ENCODE measurements at regions of chr1 and their contacts with region 1.

Region 1: GRCh38 chr1:97238816-97239215 is 517.2 kb downstream of the PTBP2 start:
- DNase-seq: no peak
- ATAC-seq: no peak
- H3K4me3 ChIP-seq: no peak overlapping the region
- H3K27ac ChIP-seq: no peak overlapping the region
- H3K4me1 ChIP-seq: no peaks in the 10 kb centered on the region
- H3K27me3 ChIP-seq: no peaks in the 10 kb centered on the region
- CTCF ChIP-seq: no peak

Region 2: GRCh38 chr1:97174039-97174701 is 64.6 kb before region 1 on chr1:
- intact Hi-C with region 1: loop called in 1 of 10 experiments (anchors 10 kb)
- DNase-seq: no peak
- ATAC-seq: peak in 1 of 8 donors; percentile 35
- H3K4me3 ChIP-seq: no peak overlapping the region
- H3K27ac ChIP-seq: no peak overlapping the region
- H3K4me1 ChIP-seq: no peaks in the 10 kb centered on the region
- H3K27me3 ChIP-seq: no peaks in the 10 kb centered on the region
- CTCF ChIP-seq: no peak

Measured in heart right ventricle (tissue), 16 donors.